Astrocyte of the cerebellum (primary cell): ENCODE measurements at regions of chr20 and their contacts with region 1.

Region 1: DNA sequence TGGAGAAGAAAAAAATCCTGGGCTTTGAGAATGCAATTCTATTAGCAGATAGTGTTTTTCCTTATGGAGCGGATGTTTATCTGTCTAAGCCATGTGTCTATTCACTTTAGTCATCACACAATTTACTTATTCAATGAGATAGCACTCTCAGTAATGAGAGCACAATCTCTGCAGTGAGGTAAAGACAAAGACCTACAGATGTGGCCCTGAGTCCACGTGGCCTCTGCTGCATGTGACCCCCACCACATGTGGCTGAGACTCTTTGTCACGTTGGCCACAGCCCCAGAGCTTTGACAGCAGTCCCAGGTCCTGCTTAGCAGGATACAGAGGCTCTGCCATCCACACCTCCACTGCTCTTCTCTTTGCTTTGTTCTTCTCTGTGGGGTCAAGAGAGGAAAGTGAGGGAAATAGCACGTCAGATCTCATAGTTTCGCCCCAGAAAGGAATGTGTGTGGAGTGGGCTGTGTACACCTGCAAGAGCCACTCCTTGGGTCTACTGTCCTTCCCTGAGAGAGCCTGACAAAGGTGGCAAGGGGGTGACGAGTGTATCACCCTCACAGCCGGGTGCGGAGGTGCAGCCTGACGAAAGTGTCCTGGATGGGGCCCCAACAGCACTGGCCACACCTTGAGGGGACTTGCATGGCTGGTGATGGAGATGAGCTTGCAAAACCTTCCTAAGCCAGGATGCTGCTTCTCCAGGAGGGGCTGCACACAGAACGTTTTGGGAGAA is 40.7 kb downstream of the ZNF831 start:
- DNase-seq: no peak
- H3K4me3 ChIP-seq: no peak overlapping the region
- CTCF ChIP-seq: no peak

Region 2: GRCh38 chr20:58870239-58871014 is 333.9 kb before region 1 on chr20:
- in situ Hi-C with region 1: no loop called
- DNase-seq: peak; percentile 38
- H3K4me3 ChIP-seq: no peak overlapping the region
- CTCF ChIP-seq: peak; percentile 96

Region 3: DNA sequence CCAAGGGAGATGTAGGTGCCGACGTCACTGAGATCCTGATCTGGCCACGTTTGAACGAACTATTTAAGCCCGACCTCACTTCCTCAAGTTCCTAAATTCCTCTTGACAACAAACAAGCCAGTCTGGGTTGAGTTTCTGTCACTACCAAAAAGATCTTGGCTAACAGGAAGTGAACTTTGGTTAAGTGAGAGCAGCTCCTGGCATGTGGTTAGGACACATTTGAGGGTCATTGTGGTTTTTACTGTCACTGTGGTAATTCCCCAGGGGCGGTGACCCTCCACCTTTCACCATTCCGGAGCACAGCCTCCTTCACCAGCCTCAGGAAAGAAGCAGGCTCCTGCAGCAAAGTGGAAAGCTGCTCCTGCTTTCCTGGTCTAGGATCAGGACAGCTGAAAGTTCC is 83.8 kb before region 1 on chr20:
- in situ Hi-C with region 1: loop called (anchors 5 kb)
- DNase-seq: no peak
- H3K4me3 ChIP-seq: no peak overlapping the region
- CTCF ChIP-seq: no peak

Region 4: GRCh38 chr20:59247731-59248684 is 43.7 kb after region 1 on chr20:
- in situ Hi-C with region 1: loop called (anchors 5 kb)
- DNase-seq: no peak
- H3K4me3 ChIP-seq: no peak overlapping the region
- CTCF ChIP-seq: no peak

Region 5: GRCh38 chr20:59299944-59300331 is 95.6 kb after region 1 on chr20:
- in situ Hi-C with region 1: no loop called
- DNase-seq: no peak
- H3K4me3 ChIP-seq: no peak overlapping the region
- CTCF ChIP-seq: no peak